ENCODE measurements at regions of chr1 and their contacts with region 1.

Region 1: DNA sequence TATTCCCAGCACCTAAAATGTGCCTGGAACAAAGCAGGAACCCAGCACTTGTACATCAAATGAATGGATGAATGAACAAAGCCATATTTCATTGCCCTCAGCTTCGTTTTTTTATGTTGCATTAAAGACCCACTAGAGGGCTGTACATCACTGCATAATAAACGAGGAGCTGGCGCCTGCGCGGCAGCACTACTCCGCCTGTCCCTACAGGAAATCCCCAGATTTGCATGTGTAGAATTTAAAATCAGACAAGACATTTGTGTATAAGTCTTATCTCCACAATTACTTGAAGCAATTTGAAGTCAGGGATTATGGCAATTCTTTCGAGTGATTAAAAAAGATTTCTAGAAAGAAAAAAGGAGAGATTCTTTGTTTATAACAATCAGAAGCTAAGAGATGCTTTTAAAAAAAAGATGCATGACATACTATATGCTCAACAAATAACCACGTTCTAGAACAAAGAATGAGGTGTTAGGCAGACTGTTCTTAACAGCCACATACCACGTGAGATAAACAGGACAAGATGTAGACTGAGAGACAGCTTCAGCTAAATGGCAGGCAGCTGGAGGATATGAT is 5.4 kb upstream of the NEK2 start:
- DNase-seq: peak; percentile 80

Region 2: GRCh38 chr1:212035123-212035834 is 354.4 kb after region 1 on chr1 and contains the starts of genes DTL and INTS7:
- in situ Hi-C with region 1: loop called (anchors 25 kb)
- DNase-seq: peak; percentile 99

Region 3: DNA sequence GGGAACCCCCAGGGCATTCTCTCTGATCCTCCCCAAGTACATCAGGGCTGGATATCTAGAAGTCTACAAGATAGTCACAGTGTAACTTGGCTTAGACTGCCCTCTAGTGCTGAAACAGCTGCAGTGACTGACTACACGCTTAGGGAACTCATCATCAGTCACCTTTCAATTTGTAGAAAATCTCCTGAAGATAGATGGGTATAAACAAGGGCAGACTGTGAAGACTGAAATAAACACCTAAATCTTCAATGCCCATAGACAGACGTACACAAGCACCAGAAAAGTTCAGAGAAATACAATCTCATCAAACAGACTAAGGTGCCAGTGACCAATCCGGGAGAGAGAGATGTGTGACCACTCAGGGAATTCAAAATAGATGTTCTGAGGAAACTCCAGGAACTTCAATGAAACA is 687.2 kb after region 1 on chr1:
- in situ Hi-C with region 1: loop called (anchors 25 kb)
- DNase-seq: peak; percentile 74